CD8-positive, alpha-beta T cell (primary cell): ENCODE measurements at regions of chr21 and their contacts with region 1.

Region 1: GRCh38 chr21:43916691-43917514 is 51.9 kb downstream of the AGPAT3 start:
- DNase-seq: peak; percentile 50 to 90 (median 75)
- ATAC-seq: peak; percentile 83
- H3K4me3 ChIP-seq: peak overlapping the region; percentile 51 to 61
- H3K4me3 Mint-ChIP-seq: peak overlapping the region; percentile 81
- H3K27ac ChIP-seq: peak overlapping the region; percentile 82 to 87
- H3K27ac Mint-ChIP-seq: peak overlapping the region; percentile 94
- H3K4me1 ChIP-seq: peaks cover 44% of the 10 kb centered on the region
- H3K4me1 Mint-ChIP-seq: peaks cover 55% of the 10 kb centered on the region
- H3K27me3 ChIP-seq: peaks cover 0 to 2% of the 10 kb centered on the region in 2 experiments
- H3K27me3 Mint-ChIP-seq: no peaks in the 10 kb centered on the region
- CTCF ChIP-seq: no peak

Region 2: GRCh38 chr21:42997053-42997452 is 919.9 kb before region 1 on chr21:
- CTCF ChIA-PET with region 1: no interaction called
- POLR2A ChIA-PET with region 1: no interaction called
- intact Hi-C with region 1: no loop called
- DNase-seq: no peak
- ATAC-seq: no peak
- H3K4me3 ChIP-seq: no peak overlapping the region
- H3K4me3 Mint-ChIP-seq: no peak overlapping the region
- H3K27ac ChIP-seq: no peak overlapping the region
- H3K27ac Mint-ChIP-seq: no peak overlapping the region
- H3K4me1 ChIP-seq: no peaks in the 10 kb centered on the region
- H3K4me1 Mint-ChIP-seq: no peaks in the 10 kb centered on the region
- H3K27me3 ChIP-seq: no peaks in the 10 kb centered on the region
- H3K27me3 Mint-ChIP-seq: no peaks in the 10 kb centered on the region
- CTCF ChIP-seq: no peak

Region 3: DNA sequence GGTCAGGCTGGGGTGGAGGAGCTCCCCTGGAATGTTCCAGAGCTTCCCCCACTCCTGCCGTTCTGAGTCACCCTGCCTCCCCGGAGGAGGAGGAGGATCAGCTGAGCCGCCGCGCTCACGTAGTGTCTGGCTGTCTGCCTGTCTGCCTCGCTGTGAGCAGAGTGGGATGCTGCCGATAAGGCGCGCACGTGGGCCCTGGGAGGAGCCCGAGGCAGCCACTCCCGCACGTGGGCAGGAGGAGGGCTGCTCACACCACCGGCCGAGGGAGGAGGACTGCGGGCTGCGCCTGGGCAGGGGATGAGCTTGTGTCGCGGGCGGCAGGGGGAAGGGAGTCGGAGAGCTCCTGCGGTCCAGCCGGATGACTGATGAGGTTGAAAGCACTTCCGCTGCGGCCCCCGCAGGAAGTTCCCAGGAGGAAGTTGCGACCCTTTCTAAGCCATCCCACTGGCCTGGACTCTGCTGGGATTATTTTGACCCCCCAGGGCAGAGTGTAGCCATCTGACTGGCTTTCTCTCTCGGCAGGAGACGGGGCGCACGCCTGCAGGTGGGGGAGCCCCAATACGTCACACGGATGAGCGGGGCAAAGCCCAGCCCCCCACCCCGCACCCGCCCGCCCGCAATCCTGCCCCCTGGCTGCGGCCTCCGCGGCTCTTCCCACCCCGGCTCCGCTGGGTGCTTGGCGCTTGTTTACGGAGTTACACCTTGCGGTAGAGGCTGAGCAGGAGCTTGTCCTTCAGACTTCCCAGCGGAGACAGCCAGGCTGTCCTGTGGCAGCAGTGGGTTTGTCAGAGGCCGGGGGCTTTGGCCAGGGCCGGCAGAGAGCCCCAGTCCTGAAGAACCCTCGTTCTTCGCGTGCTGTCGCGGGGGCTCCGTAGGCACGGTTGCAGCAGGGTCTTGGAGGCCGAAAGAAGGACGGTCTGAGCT is 188.2 kb before region 1 on chr21:
- CTCF ChIA-PET with region 1: no interaction called
- POLR2A ChIA-PET with region 1: interaction called, 3 read pairs
- intact Hi-C with region 1: loop called in 1 of 2 experiments (anchors 5 kb)
- DNase-seq: peak; percentile 57 to 94 (median 76)
- ATAC-seq: peak; percentile 88
- H3K4me3 ChIP-seq: peak overlapping the region; percentile 44 to 58
- H3K4me3 Mint-ChIP-seq: peak overlapping the region; percentile 87
- H3K27ac ChIP-seq: peak overlapping the region in 1 of 2 experiments; percentile 81
- H3K27ac Mint-ChIP-seq: peak overlapping the region; percentile 87
- H3K4me1 ChIP-seq: peaks cover 31% of the 10 kb centered on the region
- H3K4me1 Mint-ChIP-seq: peaks cover 42% of the 10 kb centered on the region
- H3K27me3 ChIP-seq: no peaks in the 10 kb centered on the region
- H3K27me3 Mint-ChIP-seq: no peaks in the 10 kb centered on the region
- CTCF ChIP-seq: peak; percentile 22

Region 4: GRCh38 chr21:43866260-43866629 is 50.7 kb before region 1 on chr21:
- CTCF ChIA-PET with region 1: interaction called, 4 read pairs
- POLR2A ChIA-PET with region 1: interaction called, 4 read pairs
- intact Hi-C with region 1: loop called (anchors 1 kb)
- DNase-seq: peak in 5 of 9 experiments; percentile 21 to 65 (median 48)
- ATAC-seq: peak; percentile 37
- H3K4me3 ChIP-seq: peak overlapping the region; percentile 56 to 61
- H3K4me3 Mint-ChIP-seq: peak overlapping the region; percentile 81
- H3K27ac ChIP-seq: peak overlapping the region; percentile 45 to 64
- H3K27ac Mint-ChIP-seq: peak overlapping the region; percentile 85
- H3K4me1 ChIP-seq: peaks cover 23% of the 10 kb centered on the region
- H3K4me1 Mint-ChIP-seq: peaks cover 49% of the 10 kb centered on the region
- H3K27me3 ChIP-seq: no peaks in the 10 kb centered on the region
- H3K27me3 Mint-ChIP-seq: no peaks in the 10 kb centered on the region
- CTCF ChIP-seq: no peak

Region 5: GRCh38 chr21:43893536-43894205 is 23.2 kb before region 1 on chr21:
- CTCF ChIA-PET with region 1: no interaction called
- POLR2A ChIA-PET with region 1: interaction called, 3 read pairs
- intact Hi-C with region 1: loop called (anchors 1 to 2 kb)
- DNase-seq: peak in 2 of 9 experiments; percentile 22 to 50
- ATAC-seq: peak; percentile 36
- H3K4me3 ChIP-seq: peak overlapping the region; percentile 5 to 13
- H3K4me3 Mint-ChIP-seq: peak overlapping the region; percentile 79
- H3K27ac ChIP-seq: peak overlapping the region in 1 of 2 experiments; percentile 52
- H3K27ac Mint-ChIP-seq: peak overlapping the region; percentile 88
- H3K4me1 ChIP-seq: peaks cover 28% of the 10 kb centered on the region
- H3K4me1 Mint-ChIP-seq: peaks cover 49% of the 10 kb centered on the region
- H3K27me3 ChIP-seq: no peaks in the 10 kb centered on the region
- H3K27me3 Mint-ChIP-seq: no peaks in the 10 kb centered on the region
- CTCF ChIP-seq: no peak

Region 6: GRCh38 chr21:44011980-44012527 is 95.2 kb after region 1 on chr21 and contains the start of gene TRAPPC10:
- CTCF ChIA-PET with region 1: no interaction called
- POLR2A ChIA-PET with region 1: no interaction called
- intact Hi-C with region 1: loop called in 1 of 2 experiments (anchors 5 kb)
- DNase-seq: peak; percentile 48 to 91 (median 75)
- ATAC-seq: peak; percentile 53
- H3K4me3 ChIP-seq: peak within 1 kb of the TSS; percentile 63 to 79
- H3K4me3 Mint-ChIP-seq: peak within 1 kb of the TSS; percentile 87
- H3K27ac ChIP-seq: peak within 1 kb of the TSS; percentile 58 to 83
- H3K27ac Mint-ChIP-seq: peak within 1 kb of the TSS; percentile 94
- H3K4me1 ChIP-seq: peaks cover 40% of the 10 kb centered on the region
- H3K4me1 Mint-ChIP-seq: peaks cover 42% of the 10 kb centered on the region
- H3K27me3 ChIP-seq: no peaks in the 10 kb centered on the region
- H3K27me3 Mint-ChIP-seq: no peaks in the 10 kb centered on the region
- CTCF ChIP-seq: no peak
- total RNA-seq, gene TRAPPC10: 128 to 130 TPM